SK-N-SH (cell line): ENCODE measurements at regions of chr10 and their contacts with region 1.

Region 1: DNA sequence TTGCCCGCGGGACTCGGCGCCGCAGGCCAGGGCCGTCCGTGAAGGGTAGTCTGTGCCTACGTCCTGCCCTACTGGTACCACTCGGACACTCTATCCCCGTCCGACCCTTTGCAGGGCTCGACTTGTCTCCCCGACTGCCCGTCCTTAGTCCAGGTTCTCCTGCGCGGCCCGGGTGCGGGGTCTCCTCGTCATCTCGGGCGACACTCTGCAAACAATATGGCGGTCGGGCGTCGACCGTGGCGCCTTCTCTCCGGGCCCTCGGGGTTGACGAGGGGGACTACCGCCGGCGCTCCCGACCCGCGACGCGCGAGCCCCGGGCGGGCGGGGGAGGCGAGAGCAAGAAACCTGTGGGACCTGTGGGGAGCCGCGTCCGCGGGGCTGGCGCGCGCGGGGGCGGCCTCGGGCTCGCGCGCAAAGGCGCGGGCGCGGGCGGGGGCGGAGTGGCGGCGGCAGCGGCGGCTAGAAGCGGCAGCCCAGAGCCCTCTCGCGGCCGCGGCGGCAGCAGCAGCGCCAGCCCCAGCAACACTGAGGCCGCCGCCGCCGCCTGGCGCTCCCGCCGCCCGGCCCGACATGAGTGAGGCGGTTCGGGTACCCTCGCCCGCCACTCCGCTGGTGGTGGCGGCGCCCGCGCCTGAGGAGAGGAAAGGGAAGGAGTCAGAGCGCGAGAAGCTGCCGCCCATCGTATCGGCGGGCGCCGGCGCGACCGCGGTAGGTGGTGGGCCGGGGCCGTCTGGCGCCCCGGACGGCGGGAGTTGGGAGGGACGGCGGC is at the start of gene HECTD2:
- DNase-seq: peak; percentile 90
- H3K4me3 ChIP-seq: peak within 1 kb of the TSS; percentile 82 to 83
- H3K27ac ChIP-seq: peak within 1 kb of the TSS; percentile 96 to 99
- H3K4me1 ChIP-seq: peaks cover 3 to 22% of the 10 kb centered on the region in 2 experiments; a peak in 3 of 4 replicates
- H3K27me3 ChIP-seq: no peaks in the 10 kb centered on the region
- CTCF ChIP-seq: peak; percentile 39
- EP300 ChIP-seq: peak in 1 of 2 experiments; percentile 20; a peak in 1 of 4 replicates
- RAD21 ChIP-seq: peak; percentile 41
- polyA plus RNA-seq, gene HECTD2: 4.1 and 5.7 TPM in 2 replicates

Region 2: GRCh38 chr10:91190876-91191583 is 219.0 kb before region 1 on chr10:
- CTCF ChIA-PET with region 1: no interaction called
- POLR2A ChIA-PET with region 1: no interaction called
- DNase-seq: no peak
- H3K4me3 ChIP-seq: 0 out of 4 replicates have a peak overlapping the region, but pooled peaks of 1 of the 2 experiments have one; percentile 4
- H3K27ac ChIP-seq: peak overlapping the region in 1 of 2 experiments; percentile 98; a peak in 3 of 4 replicates
- H3K4me1 ChIP-seq: peaks cover 0 to 17% of the 10 kb centered on the region in 2 experiments; a peak in 2 of 4 replicates
- H3K27me3 ChIP-seq: no peaks in the 10 kb centered on the region
- CTCF ChIP-seq: peak; percentile 18; the same call in 1 of the 2 replicates
- EP300 ChIP-seq: peak in 1 of 2 experiments; percentile 68; a peak in 2 of 4 replicates
- RAD21 ChIP-seq: no peak

Region 3: DNA sequence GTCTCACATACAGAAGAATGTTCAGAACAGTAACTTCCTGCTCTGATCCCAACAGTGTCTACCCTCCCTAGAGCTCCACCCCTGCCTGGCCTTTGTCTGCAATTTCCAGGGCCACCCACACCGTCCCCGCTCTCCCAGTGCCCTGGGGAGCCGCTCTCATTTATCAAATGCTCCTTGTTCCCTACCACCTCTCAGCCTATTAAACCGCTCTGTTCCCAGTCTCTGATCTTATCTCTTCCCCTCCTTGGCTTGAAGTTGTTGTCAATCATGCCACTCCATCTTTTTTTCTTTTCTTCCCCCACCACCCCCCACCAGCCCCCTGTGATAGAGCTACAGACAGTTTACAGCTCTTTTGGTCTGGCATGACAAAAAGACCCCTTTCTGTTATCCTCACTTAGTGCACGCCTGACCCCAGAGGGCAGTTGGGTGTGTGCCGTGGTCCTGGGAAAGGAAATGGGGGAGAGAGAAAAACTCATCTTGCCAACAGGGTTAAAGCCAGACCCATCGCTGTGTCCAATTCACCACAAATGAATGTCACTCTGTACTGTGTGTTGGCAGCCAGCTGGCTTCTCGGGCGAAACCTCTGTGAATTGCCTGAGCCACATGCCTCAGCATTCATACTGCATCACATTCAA is 28.7 kb before region 1 on chr10:
- CTCF ChIA-PET with region 1: interaction called, 12 read pairs
- POLR2A ChIA-PET with region 1: interaction called, 4 read pairs
- DNase-seq: peak; percentile 67
- H3K4me3 ChIP-seq: peak overlapping the region; percentile 13 to 17; a peak in 3 of 4 replicates
- H3K27ac ChIP-seq: peak overlapping the region; percentile 72 to 89
- H3K4me1 ChIP-seq: peaks cover 14 to 33% of the 10 kb centered on the region in 2 experiments; a peak in 3 of 4 replicates
- H3K27me3 ChIP-seq: no peaks in the 10 kb centered on the region
- CTCF ChIP-seq: no peak
- EP300 ChIP-seq: peak; percentile 4 to 40; a peak in 3 of 4 replicates
- RAD21 ChIP-seq: peak; percentile 8; the same call in 1 of the 2 replicates

Region 4: GRCh38 chr10:91389636-91390512 is 20.2 kb before region 1 on chr10:
- CTCF ChIA-PET with region 1: interaction called, 12 read pairs
- POLR2A ChIA-PET with region 1: no interaction called
- DNase-seq: peak; percentile 31
- H3K4me3 ChIP-seq: no peak overlapping the region
- H3K27ac ChIP-seq: no peak overlapping the region
- H3K4me1 ChIP-seq: no peaks in the 10 kb centered on the region; a peak in 1 of 4 replicates
- H3K27me3 ChIP-seq: no peaks in the 10 kb centered on the region
- CTCF ChIP-seq: peak; percentile 72
- EP300 ChIP-seq: no peak
- RAD21 ChIP-seq: peak; percentile 64

Region 5: GRCh38 chr10:91444211-91445182 is 34.4 kb after region 1 on chr10:
- CTCF ChIA-PET with region 1: no interaction called
- POLR2A ChIA-PET with region 1: no interaction called
- DNase-seq: no peak
- H3K4me3 ChIP-seq: no peak overlapping the region
- H3K27ac ChIP-seq: no peak overlapping the region
- H3K4me1 ChIP-seq: no peaks in the 10 kb centered on the region
- H3K27me3 ChIP-seq: no peaks in the 10 kb centered on the region
- CTCF ChIP-seq: no peak
- EP300 ChIP-seq: no peak
- RAD21 ChIP-seq: no peak